Heart left ventricle (tissue), 16 donors: ENCODE measurements at regions of chr1 and their contacts with region 1.

Region 1: GRCh38 chr1:222920169-222920568 is 105.3 kb downstream of the DISP1 start:
- DNase-seq: no peak
- ATAC-seq: no peak
- H3K4me3 ChIP-seq: no peak overlapping the region
- H3K27ac ChIP-seq: no peak overlapping the region
- H3K4me1 ChIP-seq: peaks cover 0 to 19% (median 11%) of the 10 kb centered on the region in 12 donors
- H3K27me3 ChIP-seq: no peaks in the 10 kb centered on the region
- CTCF ChIP-seq: no peak
- POLR2A ChIP-seq: no peak

Region 2: GRCh38 chr1:222805858-222806257 is 114.3 kb before region 1 on chr1:
- intact Hi-C with region 1: loop called in 2 of 10 experiments (anchors 5 to 10 kb)
- DNase-seq: no peak
- ATAC-seq: no peak
- H3K4me3 ChIP-seq: no peak overlapping the region
- H3K27ac ChIP-seq: no peak overlapping the region
- H3K4me1 ChIP-seq: no peaks in the 10 kb centered on the region
- H3K27me3 ChIP-seq: peaks cover 0 to 7% (median 0%) of the 10 kb centered on the region in 9 donors
- CTCF ChIP-seq: no peak
- POLR2A ChIP-seq: no peak